ENCODE measurements at regions of chr22 and their contacts with region 1.

Region 1: DNA sequence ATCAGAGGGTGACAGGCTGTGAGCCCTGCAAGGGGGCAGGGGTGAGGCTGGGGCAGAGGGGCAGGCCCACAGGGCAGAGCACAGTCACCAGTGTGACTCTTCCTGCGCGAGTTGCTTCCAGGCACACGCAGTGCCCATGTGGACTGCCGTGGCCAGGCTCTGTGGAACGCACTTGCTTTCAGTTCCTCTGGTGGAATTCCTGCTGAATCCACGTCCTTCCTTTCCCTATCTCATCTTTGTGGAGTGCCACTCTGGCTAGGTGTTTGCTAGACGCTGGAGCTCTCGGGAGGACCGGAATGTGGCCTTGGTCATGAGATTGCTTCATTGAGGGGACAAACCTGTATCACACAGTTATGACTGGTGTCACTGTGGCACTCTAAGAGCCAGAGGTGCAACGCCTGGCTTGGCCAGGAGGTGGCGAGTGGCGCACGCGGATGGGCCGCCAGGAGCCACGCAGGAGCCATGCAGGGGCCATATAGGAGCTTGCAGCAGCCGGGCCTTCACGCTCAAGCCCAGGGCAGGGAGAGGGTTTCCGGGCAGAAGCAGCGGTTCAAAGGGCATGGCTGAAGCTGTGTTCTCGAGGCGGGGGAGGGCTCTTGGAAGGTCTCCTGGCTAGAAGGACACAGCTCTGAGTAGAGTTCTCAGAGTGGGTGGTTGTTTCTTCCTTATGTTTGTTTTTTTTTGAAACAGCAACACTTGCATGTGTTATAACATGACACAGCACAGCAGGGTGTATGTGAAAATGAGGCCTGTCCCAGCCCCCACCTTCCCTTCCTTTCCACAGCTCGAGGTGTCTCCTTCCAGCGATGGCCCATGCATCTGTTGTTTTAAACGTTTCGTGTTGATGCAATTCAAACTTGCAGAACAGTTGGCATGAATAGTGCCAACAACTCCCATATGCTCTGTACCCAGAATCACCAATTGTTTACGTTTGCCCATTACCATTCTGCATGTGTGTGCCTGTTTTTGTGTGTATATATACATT is 36.2 kb downstream of the TBC1D22A start:
- DNase-seq: peak; percentile 75 to 86
- H3K4me3 ChIP-seq: no peak overlapping the region
- H3K4me3 Mint-ChIP-seq: no peak overlapping the region
- H3K27ac Mint-ChIP-seq: peak overlapping the region; percentile 74
- H3K4me1 ChIP-seq: no peaks in the 10 kb centered on the region
- H3K4me1 Mint-ChIP-seq: peaks cover 25% of the 10 kb centered on the region
- H3K27me3 ChIP-seq: no peaks in the 10 kb centered on the region
- H3K27me3 Mint-ChIP-seq: no peaks in the 10 kb centered on the region
- CTCF ChIP-seq: peak; percentile 89 to 90

Region 2: GRCh38 chr22:46740910-46741780 is 57.5 kb before region 1 on chr22:
- CTCF ChIA-PET with region 1: interaction called, 10 read pairs
- POLR2A ChIA-PET with region 1: interaction called, 3 read pairs
- intact Hi-C with region 1: no loop called
- DNase-seq: no peak
- H3K4me3 ChIP-seq: no peak overlapping the region
- H3K4me3 Mint-ChIP-seq: no peak overlapping the region
- H3K27ac Mint-ChIP-seq: peak overlapping the region; percentile 26
- H3K4me1 ChIP-seq: peaks cover 33% of the 10 kb centered on the region
- H3K4me1 Mint-ChIP-seq: peaks cover 34% of the 10 kb centered on the region
- H3K27me3 ChIP-seq: no peaks in the 10 kb centered on the region
- H3K27me3 Mint-ChIP-seq: no peaks in the 10 kb centered on the region
- CTCF ChIP-seq: no peak

Region 3: DNA sequence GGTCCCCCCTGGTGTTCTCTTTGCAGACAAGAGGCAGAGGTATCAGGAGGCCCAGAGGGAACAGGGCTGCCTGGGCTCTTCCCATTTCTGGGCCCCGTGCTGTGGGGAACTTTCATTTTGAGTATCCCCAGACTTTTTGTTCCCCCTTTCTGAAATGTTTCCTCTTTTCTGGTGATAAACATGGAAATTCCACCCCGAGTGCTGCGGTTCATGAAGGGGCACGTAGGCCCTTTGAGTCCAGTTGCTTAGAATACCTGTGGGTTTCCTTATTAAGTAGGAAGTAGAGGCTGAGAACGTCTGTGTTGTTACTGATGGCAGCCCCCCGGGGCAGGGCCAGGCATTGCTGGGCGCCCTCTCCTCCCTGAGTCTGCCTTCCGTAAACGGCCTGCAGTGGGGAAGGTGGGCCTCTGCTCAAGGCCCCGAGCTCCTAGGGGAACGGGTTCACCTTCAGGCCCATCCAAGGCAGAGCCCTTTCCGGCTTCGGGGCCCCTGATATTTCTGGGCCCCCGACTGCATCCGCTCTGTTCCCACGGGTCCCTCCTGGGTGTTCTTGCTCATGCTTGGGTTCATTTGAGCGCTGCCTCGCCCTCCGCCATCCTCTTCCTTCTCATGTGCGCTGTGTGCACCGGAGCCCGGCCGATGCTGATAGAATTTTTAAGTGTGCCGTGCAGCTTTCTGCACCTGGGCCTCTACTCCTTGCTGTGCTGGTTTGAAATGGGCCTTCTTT is 24.2 kb before region 1 on chr22:
- CTCF ChIA-PET with region 1: interaction called, 6 read pairs
- POLR2A ChIA-PET with region 1: no interaction called
- intact Hi-C with region 1: loop called (anchors 2 kb)
- DNase-seq: no peak
- H3K4me3 ChIP-seq: no peak overlapping the region
- H3K4me3 Mint-ChIP-seq: peak overlapping the region; percentile 44
- H3K27ac Mint-ChIP-seq: peak overlapping the region; percentile 84
- H3K4me1 ChIP-seq: peaks cover 38% of the 10 kb centered on the region
- H3K4me1 Mint-ChIP-seq: peaks cover 34% of the 10 kb centered on the region
- H3K27me3 ChIP-seq: no peaks in the 10 kb centered on the region
- H3K27me3 Mint-ChIP-seq: no peaks in the 10 kb centered on the region
- CTCF ChIP-seq: no peak

Region 4: GRCh38 chr22:46996595-46997310 is 198.1 kb after region 1 on chr22:
- CTCF ChIA-PET with region 1: interaction called, 3 read pairs
- POLR2A ChIA-PET with region 1: no interaction called
- intact Hi-C with region 1: loop called (anchors 10 kb)
- DNase-seq: peak in 1 of 2 experiments; percentile 35
- H3K4me3 ChIP-seq: no peak overlapping the region
- H3K4me3 Mint-ChIP-seq: no peak overlapping the region
- H3K27ac Mint-ChIP-seq: peak overlapping the region; percentile 29
- H3K4me1 ChIP-seq: peaks cover 5% of the 10 kb centered on the region; the same call in 1 of the 2 replicates
- H3K4me1 Mint-ChIP-seq: peaks cover 7% of the 10 kb centered on the region
- H3K27me3 ChIP-seq: no peaks in the 10 kb centered on the region
- H3K27me3 Mint-ChIP-seq: no peaks in the 10 kb centered on the region
- CTCF ChIP-seq: peak in 1 of 2 experiments; percentile 41